MCF 10A (cell line): ENCODE measurements at regions of chr9 and their contacts with region 1.

Region 1: DNA sequence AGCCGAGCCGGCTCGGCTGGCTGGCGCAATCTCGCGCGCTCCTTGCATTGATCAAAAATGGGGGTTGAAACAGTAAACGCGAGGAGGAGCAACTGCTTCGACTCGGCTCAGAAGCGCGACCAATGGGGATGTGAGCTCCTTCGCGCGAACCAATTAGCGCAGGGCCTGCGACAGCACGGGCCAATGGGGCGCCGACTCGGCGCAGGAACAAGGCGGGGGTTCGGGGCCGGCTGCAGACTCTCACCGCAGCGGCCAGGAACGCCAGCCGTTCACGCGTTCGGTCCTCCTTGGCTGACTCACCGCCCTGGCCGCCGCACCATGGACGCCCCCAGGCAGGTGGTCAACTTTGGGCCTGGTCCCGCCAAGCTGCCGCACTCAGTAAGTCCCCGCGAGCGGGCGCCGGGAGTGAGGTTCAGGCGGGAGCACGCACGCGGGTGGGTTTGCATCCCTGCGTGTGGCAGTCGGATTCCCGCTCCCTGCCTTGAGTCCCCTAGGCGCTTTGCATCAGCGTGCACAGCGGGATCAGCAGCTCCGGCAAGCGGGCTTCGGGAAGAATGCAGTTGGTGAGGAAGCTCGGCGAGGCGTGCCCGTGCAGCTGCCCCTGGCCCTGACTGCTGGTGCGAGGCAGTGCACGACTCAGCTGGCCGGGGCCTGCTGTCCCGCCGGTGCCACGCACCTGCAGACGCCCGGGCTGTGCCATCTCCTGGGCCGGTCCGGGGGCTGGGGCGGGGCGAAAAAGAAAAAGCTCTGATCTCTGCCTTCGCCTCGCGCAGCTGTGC is at the start of gene PSAT1:
- DNase-seq: peak; percentile 98
- H3K4me3 Mint-ChIP-seq: peak within 1 kb of the TSS; percentile 92
- H3K27ac Mint-ChIP-seq: peak within 1 kb of the TSS; percentile 87
- H3K4me1 Mint-ChIP-seq: peaks cover 8% of the 10 kb centered on the region
- H3K27me3 Mint-ChIP-seq: no peaks in the 10 kb centered on the region
- CTCF ChIP-seq: no peak
- total RNA-seq, gene PSAT1: 263 and 326 TPM in 2 replicates

Region 2: DNA sequence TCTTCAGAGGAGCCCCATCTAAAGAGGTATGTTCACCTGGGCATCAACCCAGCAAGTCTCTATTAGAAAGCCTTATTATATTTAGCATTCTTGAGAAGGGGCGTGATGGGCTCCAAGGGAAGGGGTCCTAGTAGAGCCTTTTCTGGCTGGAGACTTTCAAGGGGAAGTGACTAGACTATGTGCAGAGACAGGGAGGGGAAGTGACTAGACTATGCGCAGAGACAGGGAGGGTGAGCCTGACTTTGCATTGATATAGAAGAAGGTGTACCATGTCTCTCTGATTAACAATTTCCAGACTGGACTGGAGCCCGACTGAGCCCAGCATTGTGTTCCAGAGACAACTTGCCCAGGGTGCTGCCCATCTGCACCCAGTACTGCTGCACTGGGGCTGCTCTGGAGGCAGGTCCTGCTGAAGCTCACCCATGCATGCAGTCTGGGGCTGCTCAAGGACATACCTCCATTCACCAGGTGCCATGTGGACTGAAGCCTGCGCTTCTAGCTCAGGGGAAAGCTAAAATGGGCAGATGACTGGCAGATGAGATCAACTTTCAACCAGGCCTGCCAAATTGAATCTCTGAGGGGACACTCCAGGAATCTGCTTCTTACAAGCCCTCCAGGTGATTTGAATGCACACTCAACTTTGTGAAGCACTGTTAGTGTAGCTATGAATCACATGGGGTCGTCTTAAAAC is 565.9 kb before region 1 on chr9:
- CTCF ChIA-PET with region 1: no interaction called
- POLR2A ChIA-PET with region 1: no interaction called
- intact Hi-C with region 1: no loop called
- DNase-seq: no peak
- H3K4me3 Mint-ChIP-seq: no peak overlapping the region
- H3K27ac Mint-ChIP-seq: no peak overlapping the region
- H3K4me1 Mint-ChIP-seq: peaks cover 6% of the 10 kb centered on the region
- H3K27me3 Mint-ChIP-seq: no peaks in the 10 kb centered on the region
- CTCF ChIP-seq: no peak

Region 3: GRCh38 chr9:78261403-78262001 is 35.6 kb before region 1 on chr9:
- CTCF ChIA-PET with region 1: interaction called, 37 read pairs
- POLR2A ChIA-PET with region 1: interaction called, 85 read pairs
- intact Hi-C with region 1: loop called (anchors 1 kb)
- DNase-seq: peak; percentile 45
- H3K4me3 Mint-ChIP-seq: no peak overlapping the region
- H3K27ac Mint-ChIP-seq: no peak overlapping the region
- H3K4me1 Mint-ChIP-seq: no peaks in the 10 kb centered on the region
- H3K27me3 Mint-ChIP-seq: no peaks in the 10 kb centered on the region
- CTCF ChIP-seq: peak; percentile 61

Region 4: GRCh38 chr9:78273761-78274160 is 23.3 kb before region 1 on chr9:
- CTCF ChIA-PET with region 1: interaction called, 32 read pairs
- POLR2A ChIA-PET with region 1: interaction called, 116 read pairs
- intact Hi-C with region 1: loop called (anchors 1 kb)
- DNase-seq: no peak
- H3K4me3 Mint-ChIP-seq: no peak overlapping the region
- H3K27ac Mint-ChIP-seq: no peak overlapping the region
- H3K4me1 Mint-ChIP-seq: peaks cover 13% of the 10 kb centered on the region
- H3K27me3 Mint-ChIP-seq: no peaks in the 10 kb centered on the region
- CTCF ChIP-seq: no peak

Region 5: GRCh38 chr9:78280982-78281668 is 16.0 kb before region 1 on chr9:
- CTCF ChIA-PET with region 1: interaction called, 32 read pairs
- POLR2A ChIA-PET with region 1: interaction called, 116 read pairs
- intact Hi-C with region 1: loop called (anchors 1 kb)
- DNase-seq: peak; percentile 62
- H3K4me3 Mint-ChIP-seq: no peak overlapping the region
- H3K27ac Mint-ChIP-seq: peak overlapping the region; percentile 49
- H3K4me1 Mint-ChIP-seq: peaks cover 20% of the 10 kb centered on the region
- H3K27me3 Mint-ChIP-seq: no peaks in the 10 kb centered on the region
- CTCF ChIP-seq: no peak

Region 6: GRCh38 chr9:78552802-78553201 is 255.7 kb after region 1 on chr9:
- CTCF ChIA-PET with region 1: no interaction called
- POLR2A ChIA-PET with region 1: no interaction called
- intact Hi-C with region 1: no loop called
- DNase-seq: peak; percentile 4
- H3K4me3 Mint-ChIP-seq: no peak overlapping the region
- H3K27ac Mint-ChIP-seq: no peak overlapping the region
- H3K4me1 Mint-ChIP-seq: no peaks in the 10 kb centered on the region
- H3K27me3 Mint-ChIP-seq: no peaks in the 10 kb centered on the region
- CTCF ChIP-seq: no peak